Thyroid gland (tissue), 4 donors: ENCODE measurements at regions of chr11 and their contacts with region 1.

Region 1: DNA sequence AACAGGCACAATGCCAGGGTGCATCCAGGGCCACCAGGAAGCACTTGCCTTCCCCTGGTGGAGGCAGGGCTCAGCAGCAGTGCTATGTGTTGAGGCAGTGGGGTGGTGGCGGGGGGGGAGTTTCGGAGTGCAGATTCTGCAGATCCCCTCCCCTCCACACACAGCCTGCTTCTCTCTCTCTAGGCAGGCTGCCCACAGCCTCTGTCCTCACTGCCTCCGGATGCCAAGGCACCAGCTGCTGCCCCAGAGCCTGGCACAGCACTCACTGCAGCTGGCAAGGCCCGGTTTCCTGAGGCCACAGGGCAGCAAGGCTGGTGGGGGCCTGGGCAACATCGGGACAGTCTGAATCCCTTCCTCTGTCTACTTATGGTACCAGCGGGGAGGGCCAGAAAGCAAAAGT is 35.8 kb downstream of the NRXN2 start:
- DNase-seq: peak in 1 of 2 donors; percentile 12
- H3K4me3 ChIP-seq: no peak overlapping the region
- H3K27ac ChIP-seq: no peak overlapping the region
- H3K4me1 ChIP-seq: peaks cover 0 to 9% of the 10 kb centered on the region in 2 donors
- H3K27me3 ChIP-seq: no peaks in the 10 kb centered on the region
- CTCF ChIP-seq: no peak
- POLR2A ChIP-seq: no peak

Region 2: GRCh38 chr11:64723117-64723906 is 36.1 kb after region 1 on chr11 and contains the start of gene NRXN2:
- intact Hi-C with region 1: loop called (anchors 2 kb)
- DNase-seq: peak; percentile 79 to 83
- H3K4me3 ChIP-seq: peak within 1 kb of the TSS in 2 of 3 donors; percentile 71 to 93
- H3K27ac ChIP-seq: no peak within 1 kb of the TSS
- H3K4me1 ChIP-seq: no peaks in the 10 kb centered on the region
- H3K27me3 ChIP-seq: no peaks in the 10 kb centered on the region
- CTCF ChIP-seq: peak; percentile 80 to 99 (median 92)
- POLR2A ChIP-seq: no peak
- total RNA-seq, gene NRXN2: 2.0 to 12.3 (median 4.8) TPM

Region 3: DNA sequence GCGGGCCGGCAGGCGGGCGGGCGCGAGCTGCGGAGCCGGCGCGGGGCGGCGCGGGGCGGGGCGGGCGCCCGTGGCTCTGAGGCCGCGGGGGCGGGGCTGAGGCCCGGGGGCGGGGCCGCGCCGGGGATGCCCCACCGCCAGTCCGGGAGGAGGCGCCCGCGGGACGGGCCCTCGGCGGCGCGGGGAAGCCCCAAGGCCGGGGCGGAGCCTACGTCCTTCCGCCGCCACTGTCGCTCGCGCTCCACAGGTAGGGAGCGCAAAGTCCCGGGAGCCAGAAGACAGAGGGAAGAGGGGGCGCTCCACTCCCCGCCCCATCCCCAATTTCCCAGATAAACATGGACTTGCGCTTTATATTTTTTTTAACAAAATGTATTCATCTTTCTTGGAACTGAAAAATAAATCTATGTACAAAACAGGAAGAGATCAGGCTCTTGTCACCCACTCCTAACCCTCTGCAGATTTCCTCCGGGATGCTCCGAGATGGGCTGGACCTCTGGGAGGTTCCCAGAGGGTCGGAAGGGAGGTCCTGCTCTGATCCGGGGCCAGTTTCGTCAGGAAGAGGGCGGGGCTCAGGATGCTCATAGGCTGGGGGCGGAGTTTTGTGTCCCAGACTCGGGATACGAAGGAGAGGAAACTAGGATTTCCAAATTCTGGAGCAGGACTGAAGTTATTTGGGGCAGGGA is 116.1 kb after region 1 on chr11 and contains the start of gene MAP4K2:
- intact Hi-C with region 1: no loop called
- DNase-seq: peak; percentile 89 to 90
- H3K4me3 ChIP-seq: peak within 1 kb of the TSS in 2 of 3 donors; percentile 49 to 60
- H3K27ac ChIP-seq: peak within 1 kb of the TSS; percentile 79 to 90 (median 89)
- H3K4me1 ChIP-seq: peaks cover 6 to 21% of the 10 kb centered on the region in 2 donors
- H3K27me3 ChIP-seq: no peaks in the 10 kb centered on the region
- CTCF ChIP-seq: peak in 3 of 6 experiments; percentile 12 to 29 (median 24)
- POLR2A ChIP-seq: peak in 1 of 2 donors; percentile 35
- total RNA-seq, gene MAP4K2: 35.5 to 77.8 (median 37.5) TPM